Endothelial cell of umbilical vein (primary cell): ENCODE measurements at regions of chr6 and their contacts with region 1.

Region 1: GRCh38 chr6:7341989-7342742 is 29.2 kb upstream of the SSR1 start:
- DNase-seq: no peak
- H3K4me3 ChIP-seq: no peak overlapping the region
- H3K27ac ChIP-seq: no peak overlapping the region
- H3K4me1 ChIP-seq: no peaks in the 10 kb centered on the region
- H3K27me3 ChIP-seq: peaks cover 4 to 8% of the 10 kb centered on the region in 2 experiments
- CTCF ChIP-seq: no peak
- POLR2A ChIP-seq: no peak

Region 2: DNA sequence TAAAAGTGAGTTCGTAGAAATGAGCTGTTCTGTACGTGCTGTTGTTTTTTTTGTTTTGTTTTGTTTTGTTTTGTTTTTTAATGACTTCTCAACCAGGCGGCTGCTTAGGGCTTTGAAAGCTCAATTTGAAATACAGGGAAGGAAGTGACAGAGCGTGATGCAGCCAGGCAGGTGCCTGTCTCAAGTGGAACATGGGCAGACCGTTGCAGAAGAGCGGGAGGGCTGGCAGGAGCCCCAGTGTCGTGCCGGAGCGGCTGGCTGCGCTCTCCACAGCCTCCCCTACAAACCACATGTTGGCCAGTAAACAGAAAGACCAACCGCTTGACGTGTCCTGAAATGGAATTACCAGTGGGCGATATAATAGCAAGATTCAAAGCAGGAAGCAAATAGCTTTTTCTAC is 399.3 kb before region 1 on chr6:
- CTCF ChIA-PET with region 1: no interaction called
- POLR2A ChIA-PET with region 1: no interaction called
- dilution Hi-C with region 1: no loop called
- intact Hi-C with region 1: no loop called
- DNase-seq: no peak
- H3K4me3 ChIP-seq: no peak overlapping the region
- H3K27ac ChIP-seq: no peak overlapping the region
- H3K4me1 ChIP-seq: no peaks in the 10 kb centered on the region
- H3K27me3 ChIP-seq: no peaks in the 10 kb centered on the region
- CTCF ChIP-seq: no peak
- POLR2A ChIP-seq: no peak

Region 3: GRCh38 chr6:7276199-7276524 is 66.0 kb before region 1 on chr6:
- CTCF ChIA-PET with region 1: interaction called, 7 read pairs
- POLR2A ChIA-PET with region 1: no interaction called
- dilution Hi-C with region 1: no loop called
- intact Hi-C with region 1: loop called (anchors 1 kb)
- DNase-seq: no peak
- H3K4me3 ChIP-seq: no peak overlapping the region
- H3K27ac ChIP-seq: no peak overlapping the region
- H3K4me1 ChIP-seq: no peaks in the 10 kb centered on the region
- H3K27me3 ChIP-seq: no peaks in the 10 kb centered on the region
- CTCF ChIP-seq: no peak
- POLR2A ChIP-seq: no peak

Region 4: DNA sequence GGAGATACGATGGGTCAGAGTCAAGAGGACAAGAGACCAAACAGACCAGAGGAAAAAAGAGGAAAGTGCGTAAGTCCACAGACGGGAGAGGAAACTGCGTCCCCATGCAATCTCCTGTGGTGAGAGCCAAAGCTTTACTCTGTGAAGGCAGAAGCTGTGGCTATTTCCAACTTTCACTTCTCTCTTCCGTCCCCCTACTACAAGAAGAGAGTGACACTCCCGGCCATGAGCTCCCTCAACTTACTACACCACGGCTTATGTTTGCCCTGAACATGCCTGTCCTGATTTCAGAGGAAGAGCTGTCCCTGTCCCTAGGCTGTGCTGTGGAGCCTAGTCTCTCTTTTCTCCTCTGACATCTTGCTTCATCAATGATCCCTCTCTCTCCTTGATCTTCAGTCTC is 17.6 kb before region 1 on chr6:
- CTCF ChIA-PET with region 1: interaction called, 13 read pairs
- POLR2A ChIA-PET with region 1: no interaction called
- dilution Hi-C with region 1: no loop called
- intact Hi-C with region 1: no loop called
- DNase-seq: no peak
- H3K4me3 ChIP-seq: no peak overlapping the region
- H3K27ac ChIP-seq: no peak overlapping the region
- H3K4me1 ChIP-seq: no peaks in the 10 kb centered on the region
- H3K27me3 ChIP-seq: peaks cover 0 to 2% of the 10 kb centered on the region in 2 experiments
- CTCF ChIP-seq: no peak
- POLR2A ChIP-seq: no peak